Activated T-helper 1 cell treated with anti-CD3 and anti-CD28 coated beads, Interleukin-12 subunit alpha, Interleukin-12 subunit beta, Interleukin-2, Interleukin-4 antibody, amounts not matched to agents 30 ng/mL and 10 ng/mL and 1 ng/mL, durations not matched to agents 14 hours and 24 hours and 36 hours (primary cell): ENCODE measurements at regions of chr1 and their contacts with region 1.

Region 1: DNA sequence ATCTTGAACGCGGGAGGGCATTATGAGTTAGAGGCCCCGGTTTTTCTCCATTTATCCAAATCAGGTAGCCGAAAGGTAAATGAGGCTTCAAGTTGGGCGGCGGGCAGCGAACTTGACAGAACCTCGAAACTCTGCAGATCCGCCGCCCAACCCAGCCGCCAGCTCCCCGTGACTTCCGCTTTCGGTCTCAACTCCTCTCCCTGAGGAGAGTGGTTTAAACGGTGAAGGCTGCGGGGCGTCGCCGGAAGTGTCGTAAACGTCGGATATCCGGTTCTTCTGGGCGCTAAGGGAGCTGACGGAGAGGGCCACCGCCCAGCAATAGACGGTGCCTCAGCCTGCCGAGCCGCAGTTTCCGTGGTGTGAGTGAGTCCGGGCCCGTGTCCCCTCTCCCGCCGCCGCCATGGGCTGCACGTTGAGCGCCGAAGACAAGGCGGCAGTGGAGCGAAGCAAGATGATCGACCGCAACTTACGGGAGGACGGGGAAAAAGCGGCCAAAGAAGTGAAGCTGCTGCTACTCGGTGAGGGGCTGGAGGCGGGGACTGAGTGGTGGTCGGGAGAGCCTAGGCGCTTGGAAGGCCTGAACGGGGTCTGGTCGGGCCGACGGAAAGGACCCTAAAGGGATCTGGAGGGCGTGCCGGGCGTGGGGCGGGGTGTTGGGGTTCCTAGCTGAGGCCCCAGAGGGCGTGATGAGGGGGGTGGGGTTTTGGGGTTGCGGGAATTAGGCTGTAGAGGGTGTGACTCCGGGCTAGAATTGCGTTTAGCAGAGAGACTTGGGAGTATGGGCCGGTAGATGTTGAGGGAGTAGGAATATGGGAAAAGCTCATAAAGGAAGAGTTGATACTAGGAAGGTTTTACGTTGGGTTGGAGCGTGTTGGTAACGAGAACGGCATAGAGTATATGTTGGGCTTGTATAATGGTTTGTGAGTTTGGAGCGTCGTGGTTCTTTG is at the start of gene GNAI3:
- DNase-seq: peak; percentile 96
- H3K4me3 Mint-ChIP-seq: peak within 1 kb of the TSS; percentile 94
- H3K27ac Mint-ChIP-seq: peak within 1 kb of the TSS; percentile 96
- H3K4me1 Mint-ChIP-seq: peaks cover 48% of the 10 kb centered on the region
- H3K27me3 Mint-ChIP-seq: no peaks in the 10 kb centered on the region
- total RNA-seq, gene GNAI3: 8.4 and 8.9 TPM in 2 replicates

Region 2: GRCh38 chr1:109483672-109484518 is 64.7 kb before region 1 on chr1 and contains the start of gene ATXN7L2:
- intact Hi-C with region 1: loop called (anchors 1 kb)
- DNase-seq: peak; percentile 87
- H3K4me3 Mint-ChIP-seq: peak within 1 kb of the TSS; percentile 95
- H3K27ac Mint-ChIP-seq: peak within 1 kb of the TSS; percentile 96
- H3K4me1 Mint-ChIP-seq: peaks cover 35% of the 10 kb centered on the region
- H3K27me3 Mint-ChIP-seq: peaks cover 13% of the 10 kb centered on the region
- total RNA-seq, gene ATXN7L2: 17.4 and 18.0 TPM in 2 replicates

Region 3: DNA sequence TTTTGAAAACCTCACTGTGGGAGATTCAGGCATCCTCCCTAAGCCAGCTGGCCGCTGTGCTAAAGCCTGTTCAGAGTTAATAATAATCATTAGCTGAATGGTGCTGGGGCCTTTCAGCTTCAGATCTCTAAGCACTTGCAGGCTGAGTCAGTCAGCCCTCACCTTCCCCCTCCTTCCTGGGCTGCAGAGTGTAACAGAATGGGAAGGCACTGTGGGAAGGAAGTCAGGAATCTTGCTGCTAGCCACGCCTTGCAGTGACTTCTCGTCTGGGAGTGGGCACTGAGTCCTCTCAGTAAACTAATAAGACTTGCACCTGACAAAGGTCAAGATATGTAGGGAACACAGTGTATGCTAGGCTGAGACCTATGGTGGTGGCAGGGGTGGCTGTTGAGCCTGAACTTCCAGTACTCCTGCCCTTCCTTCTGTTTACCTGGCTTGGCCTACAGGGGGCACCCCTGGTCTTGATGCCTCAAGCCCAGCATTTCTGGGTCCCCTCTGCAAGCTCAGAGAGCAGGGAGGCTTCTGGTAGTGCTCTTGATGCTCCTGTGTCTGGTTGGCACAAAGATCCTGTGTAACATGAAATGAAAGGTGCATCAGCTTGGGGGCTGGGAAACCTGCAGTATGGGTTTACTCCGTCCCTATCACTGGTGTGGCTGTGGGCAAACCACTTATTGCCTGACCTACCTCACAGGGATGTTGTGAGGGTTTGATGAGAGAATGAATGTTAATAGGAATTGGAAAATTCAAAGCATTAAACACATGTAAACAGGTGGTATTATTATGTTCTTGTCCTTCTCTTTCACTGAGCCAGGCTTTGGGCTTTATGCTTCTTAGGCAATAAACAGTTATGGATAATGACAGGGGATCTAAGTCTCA is 48.7 kb before region 1 on chr1:
- intact Hi-C with region 1: no loop called
- DNase-seq: peak; percentile 32
- H3K4me3 Mint-ChIP-seq: no peak overlapping the region
- H3K27ac Mint-ChIP-seq: no peak overlapping the region
- H3K4me1 Mint-ChIP-seq: peaks cover 75% of the 10 kb centered on the region
- H3K27me3 Mint-ChIP-seq: no peaks in the 10 kb centered on the region

Region 4: DNA sequence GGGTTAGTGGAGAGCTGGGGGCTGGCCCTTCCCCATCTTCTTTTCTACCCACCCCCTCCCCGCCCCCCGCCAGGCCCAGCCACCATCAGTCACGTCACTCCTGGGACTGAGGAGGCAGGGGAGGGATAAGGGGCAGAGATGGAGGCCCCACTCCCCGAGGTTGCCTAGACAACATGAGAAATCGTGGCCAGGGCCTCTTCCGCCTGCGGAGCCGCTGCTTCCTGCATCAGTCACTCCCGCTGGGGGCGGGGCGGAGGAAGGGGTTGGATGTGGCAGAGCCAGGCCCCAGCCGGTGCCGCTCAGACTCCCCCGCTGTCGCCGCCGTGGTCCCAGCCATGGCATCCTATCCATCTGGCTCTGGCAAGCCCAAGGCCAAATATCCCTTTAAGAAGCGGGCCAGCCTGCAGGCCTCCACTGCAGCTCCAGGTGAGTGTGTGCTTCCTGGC is 72.3 kb after region 1 on chr1:
- intact Hi-C with region 1: loop called (anchors 1 kb)
- DNase-seq: peak; percentile 96
- H3K4me3 Mint-ChIP-seq: peak overlapping the region; percentile 95
- H3K27ac Mint-ChIP-seq: peak overlapping the region; percentile 97
- H3K4me1 Mint-ChIP-seq: peaks cover 64% of the 10 kb centered on the region
- H3K27me3 Mint-ChIP-seq: peaks cover 2% of the 10 kb centered on the region

Region 5: GRCh38 chr1:109643385-109644230 is 95.0 kb after region 1 on chr1:
- intact Hi-C with region 1: loop called (anchors 1 kb)
- DNase-seq: peak; percentile 82
- H3K4me3 Mint-ChIP-seq: no peak overlapping the region
- H3K27ac Mint-ChIP-seq: no peak overlapping the region
- H3K4me1 Mint-ChIP-seq: peaks cover 14% of the 10 kb centered on the region
- H3K27me3 Mint-ChIP-seq: peaks cover 5% of the 10 kb centered on the region

Region 6: GRCh38 chr1:109739738-109740660 is 191.4 kb after region 1 on chr1:
- intact Hi-C with region 1: loop called (anchors 1 kb)
- DNase-seq: peak; percentile 79
- H3K4me3 Mint-ChIP-seq: peak overlapping the region; percentile 77
- H3K27ac Mint-ChIP-seq: peak overlapping the region; percentile 47
- H3K4me1 Mint-ChIP-seq: peaks cover 14% of the 10 kb centered on the region
- H3K27me3 Mint-ChIP-seq: peaks cover 27% of the 10 kb centered on the region

Region 7: DNA sequence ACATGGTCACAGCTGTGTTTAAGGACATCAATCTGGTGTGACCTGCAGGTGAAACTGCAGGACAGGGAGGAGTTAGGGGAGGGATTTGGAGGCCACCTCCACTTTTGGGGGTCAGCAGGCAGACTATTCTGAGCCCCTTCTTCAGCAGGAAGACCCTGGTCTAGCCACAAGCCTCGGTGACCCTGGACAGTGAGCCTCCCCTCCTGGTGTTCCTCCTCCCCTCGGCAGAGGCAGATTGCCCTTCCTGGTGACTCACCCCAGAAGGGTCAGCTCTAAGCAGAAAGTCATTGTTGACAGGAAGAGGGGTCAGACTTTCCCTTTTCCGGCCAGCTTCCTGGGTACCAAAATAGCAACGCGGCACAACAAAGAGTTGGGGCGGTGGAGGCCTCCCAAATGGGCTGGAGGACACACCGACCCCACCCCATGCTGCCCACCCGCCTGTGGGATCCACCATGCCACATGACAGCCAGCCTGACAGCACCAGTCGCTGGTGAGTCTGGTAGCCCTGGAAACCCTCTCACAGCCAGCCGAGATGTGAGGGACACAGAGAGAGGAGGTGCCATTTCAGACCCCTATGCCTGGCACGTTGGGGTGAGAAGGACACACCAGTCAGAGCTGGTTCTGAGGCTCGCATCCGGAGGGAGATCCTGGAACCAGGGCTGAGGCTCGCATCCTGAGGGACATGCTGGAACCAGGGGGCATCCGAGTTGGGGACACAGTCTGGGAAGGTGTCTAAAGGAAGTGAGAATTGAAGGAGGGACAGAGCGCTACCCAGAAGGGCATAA is 347.3 kb after region 1 on chr1:
- intact Hi-C with region 1: loop called (anchors 10 kb)
- DNase-seq: peak; percentile 30
- H3K4me3 Mint-ChIP-seq: no peak overlapping the region
- H3K27ac Mint-ChIP-seq: no peak overlapping the region
- H3K4me1 Mint-ChIP-seq: peaks cover 5% of the 10 kb centered on the region
- H3K27me3 Mint-ChIP-seq: no peaks in the 10 kb centered on the region